Motor neuron (in vitro differentiated cells): ENCODE measurements at regions of chr4 and their contacts with region 1.

Region 1: DNA sequence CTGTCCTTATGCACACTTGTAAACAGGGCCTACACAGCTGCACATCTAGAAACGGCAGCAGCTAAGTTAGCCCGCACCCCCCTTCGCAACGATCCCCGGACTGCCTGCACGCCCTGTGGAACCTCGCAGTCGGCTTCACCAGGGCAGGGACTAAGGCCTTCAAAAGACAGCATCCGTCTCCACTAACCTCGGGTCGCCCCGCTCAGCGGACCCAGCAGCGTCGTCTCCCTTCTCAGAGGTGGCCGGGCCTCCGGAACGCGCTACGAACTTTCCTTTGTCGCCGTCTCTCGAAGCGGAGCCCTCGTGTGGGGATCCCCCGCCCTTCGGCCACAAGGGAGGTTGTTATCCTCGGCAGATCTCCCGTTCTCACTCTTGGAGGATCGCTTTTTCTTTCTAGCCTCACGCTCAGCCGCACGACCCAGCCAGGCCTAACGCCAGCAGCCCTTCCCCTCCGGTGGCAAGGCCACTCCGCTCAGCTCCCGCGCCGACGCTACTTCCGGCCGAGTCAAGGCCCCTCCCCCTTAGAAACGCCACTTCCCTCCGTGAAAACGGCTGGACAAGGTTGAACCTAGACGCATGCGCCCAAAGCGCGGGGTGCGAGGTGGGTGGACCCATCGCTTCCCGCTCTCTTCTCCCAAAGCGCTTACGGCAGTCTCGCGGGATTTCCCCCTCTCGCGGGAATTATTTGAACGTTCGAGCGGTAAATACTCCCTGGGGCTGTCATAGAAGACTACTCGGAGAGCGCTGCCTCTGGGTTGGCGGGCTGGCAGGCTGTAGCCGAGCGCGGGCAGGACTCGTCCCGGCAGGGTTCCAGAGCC is at the starts of genes DCAF16 and NCAPG:
- ATAC-seq: peak; percentile 88 to 96 (median 93)
- H3K4me3 ChIP-seq: peak within 1 kb of the TSS; percentile 58 to 95 (median 73)
- H3K27ac ChIP-seq: peak within 1 kb of the TSS; percentile 89 to 96
- H3K4me1 ChIP-seq: peaks cover 7 to 23% of the 10 kb centered on the region in 2 donors
- total RNA-seq, gene DCAF16: 30.1 to 87.1 (median 44.5) TPM
- total RNA-seq, gene NCAPG: 0.97 to 36.7 (median 2.0) TPM

Region 2: DNA sequence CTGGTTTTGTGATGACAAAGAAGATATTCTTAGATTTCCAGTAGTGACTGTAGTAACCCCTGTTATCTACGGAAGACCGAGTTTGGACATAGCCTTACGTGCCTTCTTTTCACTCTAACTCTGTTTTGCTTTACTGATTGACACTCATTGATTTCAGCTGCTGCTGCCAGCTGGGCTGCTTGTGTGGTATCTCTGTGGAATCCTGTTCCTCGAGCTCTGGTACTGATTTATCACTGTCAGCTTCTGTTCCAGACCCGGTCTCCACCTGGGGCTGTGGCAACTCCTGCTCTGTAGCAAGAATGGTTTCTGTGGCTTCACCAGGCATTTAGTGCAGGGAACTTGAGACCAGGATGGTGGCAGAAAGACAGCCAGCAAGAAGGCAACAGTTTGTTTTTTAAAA is 258.0 kb before region 1 on chr4:
- in situ Hi-C with region 1: loop called in 1 of 9 experiments (anchors 10 kb)
- ATAC-seq: peak in 1 of 8 experiments; percentile 30
- H3K4me3 ChIP-seq: no peak overlapping the region
- H3K27ac ChIP-seq: no peak overlapping the region
- H3K4me1 ChIP-seq: no peaks in the 10 kb centered on the region

Region 3: GRCh38 chr4:17576932-17577665 is 233.4 kb before region 1 on chr4 and contains the start of gene LAP3:
- in situ Hi-C with region 1: loop called in 1 of 9 experiments (anchors 10 kb)
- ATAC-seq: peak; percentile 85 to 97 (median 95)
- H3K4me3 ChIP-seq: peak within 1 kb of the TSS; percentile 43 to 65 (median 62)
- H3K27ac ChIP-seq: peak within 1 kb of the TSS; percentile 49 to 69
- H3K4me1 ChIP-seq: peaks cover 10% of the 10 kb centered on the region in 2 donors
- total RNA-seq, gene LAP3: 17.6 to 129 (median 55.4) TPM

Region 4: DNA sequence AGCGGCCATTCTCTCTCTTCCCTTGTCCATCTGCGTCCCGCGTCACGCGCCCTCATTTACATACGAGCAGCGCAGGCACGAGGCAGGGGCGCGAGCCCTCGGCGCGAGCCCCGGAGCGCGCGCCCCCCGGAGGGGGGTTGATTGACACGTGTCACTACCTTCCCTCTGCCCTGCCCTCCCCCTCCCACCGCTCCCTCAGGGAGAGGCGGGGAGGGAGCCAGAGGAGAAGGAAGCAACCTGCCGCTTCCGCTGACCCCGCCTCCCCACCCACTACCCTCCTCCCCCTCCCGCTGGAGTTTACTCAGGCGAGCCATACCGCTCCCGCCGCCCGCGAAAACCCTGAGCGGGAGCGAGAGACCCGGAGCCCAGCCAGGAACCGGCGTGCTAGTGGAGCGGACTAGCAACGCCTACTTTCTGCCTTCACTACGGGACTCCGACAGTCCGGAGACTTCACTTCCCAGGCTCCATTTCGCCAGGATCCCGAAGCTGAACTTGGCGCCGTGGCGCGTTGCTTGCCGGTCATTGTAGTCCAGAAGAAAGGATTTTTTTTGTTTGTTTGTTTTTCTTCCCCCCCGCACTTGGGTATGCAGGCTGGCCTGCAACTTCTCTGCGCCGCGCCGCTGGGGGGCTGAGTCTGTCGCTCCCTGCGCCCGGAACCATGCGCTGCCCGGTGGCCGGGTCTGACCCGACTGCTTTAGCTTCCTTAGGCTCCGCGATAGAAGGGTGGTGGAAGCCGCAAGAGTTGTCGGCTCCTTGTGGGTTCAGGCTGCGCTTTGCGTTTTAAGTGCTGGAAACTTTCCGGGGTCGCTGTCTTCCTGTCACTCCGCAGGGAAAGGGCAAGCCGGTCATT is 211.5 kb after region 1 on chr4 and contains the start of gene LCORL:
- in situ Hi-C with region 1: loop called in 1 of 9 experiments (anchors 25 kb)
- ATAC-seq: peak; percentile 79 to 90 (median 86)
- H3K4me3 ChIP-seq: peak within 1 kb of the TSS; percentile 62 to 91 (median 79)
- H3K27ac ChIP-seq: peak within 1 kb of the TSS; percentile 77 to 95
- H3K4me1 ChIP-seq: no peaks in the 10 kb centered on the region
- total RNA-seq, gene LCORL: 9.4 to 31.0 (median 25.6) TPM

Region 5: DNA sequence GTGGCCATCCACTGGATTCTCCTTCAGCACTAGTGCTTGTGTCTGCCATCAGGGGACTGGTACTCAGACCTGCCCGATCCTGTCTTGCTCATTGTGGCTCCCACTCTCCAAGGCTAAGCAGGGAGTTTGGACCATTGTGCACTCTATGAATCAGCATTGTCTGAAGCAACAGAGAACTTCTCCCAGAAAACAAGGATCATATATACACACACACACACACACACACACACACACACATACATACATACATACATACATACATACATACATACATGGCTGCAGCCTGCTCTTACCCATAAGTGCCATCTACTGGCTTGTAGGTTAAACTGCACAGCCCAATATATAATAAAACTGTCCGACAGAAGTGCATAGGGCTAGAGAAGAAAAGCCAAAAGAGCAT is 556.4 kb after region 1 on chr4:
- in situ Hi-C with region 1: loop called in 2 of 9 experiments (anchors 25 kb)
- ATAC-seq: peak; percentile 68 to 95 (median 86)
- H3K4me3 ChIP-seq: no peak overlapping the region
- H3K27ac ChIP-seq: no peak overlapping the region
- H3K4me1 ChIP-seq: no peaks in the 10 kb centered on the region

Region 6: GRCh38 chr4:18568600-18568999 is 758.1 kb after region 1 on chr4:
- in situ Hi-C with region 1: loop called in 1 of 9 experiments (anchors 25 kb)
- ATAC-seq: peak in 6 of 8 experiments; percentile 33 to 70 (median 44)
- H3K4me3 ChIP-seq: no peak overlapping the region
- H3K27ac ChIP-seq: no peak overlapping the region
- H3K4me1 ChIP-seq: no peaks in the 10 kb centered on the region

Region 7: GRCh38 chr4:18593445-18594002 is 783.1 kb after region 1 on chr4:
- in situ Hi-C with region 1: loop called in 3 of 9 experiments (anchors 25 kb)
- ATAC-seq: peak; percentile 72 to 89 (median 84)
- H3K4me3 ChIP-seq: no peak overlapping the region
- H3K27ac ChIP-seq: no peak overlapping the region
- H3K4me1 ChIP-seq: peaks cover 0 to 3% of the 10 kb centered on the region in 2 donors